Activated CD8-positive, alpha-beta T cell treated with anti-CD3 and anti-CD28 coated beads for 36 hours (primary cell): ENCODE measurements at regions of chr14 and their contacts with region 1.

Region 1: GRCh38 chr14:77457522-77458290 is at the starts of genes AHSA1 and VIPAS39:
- DNase-seq: peak; percentile 98
- ATAC-seq: peak; percentile 96
- H3K4me3 Mint-ChIP-seq: peak within 1 kb of the TSS; percentile 99
- H3K27ac Mint-ChIP-seq: peak within 1 kb of the TSS; percentile 100
- H3K4me1 Mint-ChIP-seq: peaks cover 39% of the 10 kb centered on the region
- H3K27me3 Mint-ChIP-seq: no peaks in the 10 kb centered on the region
- CTCF ChIP-seq: no peak
- total RNA-seq, gene AHSA1: 325 to 339 TPM
- total RNA-seq, gene VIPAS39: 13.9 to 16.8 TPM

Region 2: GRCh38 chr14:77314043-77314442 is 143.7 kb before region 1 on chr14:
- CTCF ChIA-PET with region 1: interaction called, 10 read pairs
- POLR2A ChIA-PET with region 1: no interaction called
- intact Hi-C with region 1: no loop called
- DNase-seq: no peak
- ATAC-seq: no peak
- H3K4me3 Mint-ChIP-seq: no peak overlapping the region
- H3K27ac Mint-ChIP-seq: no peak overlapping the region
- H3K4me1 Mint-ChIP-seq: peaks cover under 1% of the 10 kb centered on the region
- H3K27me3 Mint-ChIP-seq: no peaks in the 10 kb centered on the region
- CTCF ChIP-seq: no peak

Region 3: DNA sequence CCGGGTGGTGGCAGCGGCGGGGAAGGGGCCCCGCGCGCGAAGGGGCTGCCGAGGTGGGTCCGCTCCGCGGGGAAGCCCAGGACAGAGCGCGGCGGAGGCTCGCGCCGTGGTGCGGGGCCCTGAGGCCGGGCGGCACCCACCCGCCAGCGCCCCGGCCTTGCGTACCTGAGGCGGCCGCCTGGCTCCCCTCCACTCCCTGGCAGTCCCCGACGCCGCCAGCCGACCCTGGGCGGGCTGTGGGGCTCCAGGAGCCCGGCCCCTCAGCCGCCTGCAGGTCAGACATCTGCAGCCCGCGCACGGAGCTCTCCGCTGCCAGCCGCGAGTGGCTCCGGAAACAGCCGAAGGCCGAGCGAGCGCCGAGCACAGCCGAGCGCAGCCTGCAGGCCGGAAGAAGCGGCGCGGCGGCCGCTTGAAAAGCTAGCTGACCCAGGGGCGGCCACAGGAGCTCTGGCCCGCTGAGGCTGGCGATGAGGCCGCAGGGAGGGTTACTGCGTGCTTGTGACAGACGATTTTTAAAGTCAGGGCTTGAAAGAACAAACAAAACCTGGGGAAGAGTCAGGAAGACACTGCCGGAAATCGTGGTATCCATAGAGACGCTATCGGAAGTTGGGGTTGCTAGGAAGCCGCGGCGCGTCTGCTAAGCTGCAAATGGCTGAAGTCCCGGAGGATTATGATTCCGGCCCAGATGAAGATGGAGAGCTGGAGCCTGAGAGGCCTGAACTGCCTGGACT is 80.8 kb before region 1 on chr14 and contains the starts of genes SAMD15 and TMED8:
- CTCF ChIA-PET with region 1: interaction called, 5 read pairs
- POLR2A ChIA-PET with region 1: interaction called, 8 read pairs
- intact Hi-C with region 1: loop called (anchors 2 kb)
- DNase-seq: peak; percentile 88
- ATAC-seq: peak; percentile 96
- H3K4me3 Mint-ChIP-seq: peak within 1 kb of the TSS; percentile 91
- H3K27ac Mint-ChIP-seq: peak within 1 kb of the TSS; percentile 91
- H3K4me1 Mint-ChIP-seq: peaks cover 38% of the 10 kb centered on the region
- H3K27me3 Mint-ChIP-seq: no peaks in the 10 kb centered on the region
- CTCF ChIP-seq: no peak
- total RNA-seq, gene SAMD15: 0.11 to 0.56 TPM
- total RNA-seq, gene TMED8: 25.0 to 25.4 TPM

Region 4: DNA sequence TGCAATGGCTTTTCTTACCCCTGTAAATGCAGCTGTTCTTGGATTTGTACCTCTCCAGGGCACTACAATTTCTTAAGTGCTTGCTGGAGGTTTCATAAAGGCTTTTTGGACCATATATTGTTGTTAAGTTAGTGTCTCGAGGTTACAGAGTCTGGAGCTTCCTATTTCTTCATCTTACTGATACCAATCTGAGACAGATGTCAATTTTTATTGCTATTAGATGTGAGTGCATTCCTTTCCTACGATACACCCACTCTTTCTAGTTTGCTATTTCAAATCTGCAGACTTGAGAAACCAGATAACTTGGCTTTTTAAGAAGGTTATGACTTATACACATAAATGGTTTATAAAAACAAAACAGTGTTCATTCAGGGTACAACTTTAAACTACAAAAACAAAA is 36.5 kb before region 1 on chr14:
- CTCF ChIA-PET with region 1: no interaction called
- POLR2A ChIA-PET with region 1: no interaction called
- intact Hi-C with region 1: no loop called
- DNase-seq: no peak
- ATAC-seq: no peak
- H3K4me3 Mint-ChIP-seq: no peak overlapping the region
- H3K27ac Mint-ChIP-seq: no peak overlapping the region
- H3K4me1 Mint-ChIP-seq: no peaks in the 10 kb centered on the region
- H3K27me3 Mint-ChIP-seq: no peaks in the 10 kb centered on the region
- CTCF ChIP-seq: no peak

Region 5: DNA sequence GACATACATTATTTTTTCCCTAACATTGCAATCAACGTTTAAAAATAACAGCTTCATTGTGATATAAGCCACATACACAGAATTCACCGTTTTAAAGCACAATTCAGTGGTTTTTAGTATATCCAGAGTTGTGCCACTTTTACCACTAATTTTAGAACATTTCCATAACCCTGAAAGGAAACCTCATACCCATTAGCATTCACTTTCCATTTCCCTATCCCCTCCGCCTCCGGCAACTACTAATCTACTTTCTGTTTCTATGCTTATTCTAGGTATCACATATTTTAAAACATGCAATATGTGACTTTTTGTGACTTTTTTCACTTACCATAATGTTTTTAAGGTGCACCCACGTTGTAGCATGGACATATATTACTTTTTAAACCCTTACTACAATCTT is 96.5 kb after region 1 on chr14:
- CTCF ChIA-PET with region 1: interaction called, 27 read pairs
- POLR2A ChIA-PET with region 1: interaction called, 3 read pairs
- intact Hi-C with region 1: no loop called
- DNase-seq: peak; percentile 51
- ATAC-seq: peak; percentile 70
- H3K4me3 Mint-ChIP-seq: no peak overlapping the region
- H3K27ac Mint-ChIP-seq: peak overlapping the region; percentile 92
- H3K4me1 Mint-ChIP-seq: peaks cover 17% of the 10 kb centered on the region
- H3K27me3 Mint-ChIP-seq: no peaks in the 10 kb centered on the region
- CTCF ChIP-seq: no peak

Region 6: DNA sequence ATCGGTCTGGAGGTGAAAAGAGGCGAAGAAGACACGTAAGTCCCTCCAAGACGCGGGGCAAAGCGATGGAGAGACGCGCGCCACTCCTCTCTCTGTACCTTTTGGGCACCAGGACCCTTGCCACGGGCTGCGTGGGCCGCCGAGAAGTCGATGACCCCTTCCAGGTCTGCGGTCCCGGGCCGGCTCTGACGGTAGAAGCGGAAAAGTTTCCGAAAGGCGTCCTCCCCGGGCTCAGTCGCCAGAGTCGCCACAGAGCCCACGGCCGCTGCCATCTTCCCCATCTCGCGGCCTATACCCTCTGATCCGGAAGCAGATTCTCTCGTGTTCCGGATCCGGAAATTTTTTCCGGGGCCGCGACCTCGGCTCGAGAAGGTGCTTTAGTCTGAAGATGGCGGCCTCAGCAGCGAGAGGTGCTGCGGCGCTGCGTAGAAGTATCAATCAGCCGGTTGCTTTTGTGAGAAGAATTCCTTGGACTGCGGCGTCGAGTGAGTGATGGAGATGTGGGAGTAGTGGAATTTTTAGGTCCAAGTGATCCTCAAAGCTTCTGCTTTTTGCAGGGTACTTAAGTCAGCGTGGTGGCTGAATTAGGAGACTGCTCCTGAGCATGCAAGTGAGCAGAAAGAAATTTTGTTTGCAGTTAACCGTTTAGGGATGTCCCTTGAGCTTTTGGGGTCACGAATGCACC is 250.2 kb after region 1 on chr14 and contains the starts of genes ALKBH1 and SLIRP:
- CTCF ChIA-PET with region 1: interaction called, 13 read pairs
- POLR2A ChIA-PET with region 1: interaction called, 6 read pairs
- intact Hi-C with region 1: loop called (anchors 5 kb)
- DNase-seq: peak; percentile 91
- ATAC-seq: peak; percentile 99
- H3K4me3 Mint-ChIP-seq: peak within 1 kb of the TSS; percentile 84
- H3K27ac Mint-ChIP-seq: peak within 1 kb of the TSS; percentile 91
- H3K4me1 Mint-ChIP-seq: peaks cover 37% of the 10 kb centered on the region
- H3K27me3 Mint-ChIP-seq: no peaks in the 10 kb centered on the region
- CTCF ChIP-seq: peak; percentile 5
- total RNA-seq, gene ALKBH1: 16.3 to 18.0 TPM
- total RNA-seq, gene SLIRP: 141 to 148 TPM

Region 7: GRCh38 chr14:77849711-77850110 is 392.0 kb after region 1 on chr14:
- CTCF ChIA-PET with region 1: no interaction called
- POLR2A ChIA-PET with region 1: no interaction called
- intact Hi-C with region 1: no loop called
- DNase-seq: no peak
- ATAC-seq: no peak
- H3K4me3 Mint-ChIP-seq: no peak overlapping the region
- H3K27ac Mint-ChIP-seq: no peak overlapping the region
- H3K4me1 Mint-ChIP-seq: no peaks in the 10 kb centered on the region
- H3K27me3 Mint-ChIP-seq: no peaks in the 10 kb centered on the region
- CTCF ChIP-seq: no peak